K562 (cell line): ENCODE measurements at regions of chr12 and their contacts with region 1.

Region 1: GRCh38 chr12:47377414-47378221 is 297.9 kb upstream of the AMIGO2 start:
- DNase-seq: peak; percentile 16 to 79 (median 41)
- ATAC-seq: peak; percentile 98
- H3K4me3 ChIP-seq: no peak overlapping the region
- H3K27ac ChIP-seq: peak overlapping the region; percentile 50; the same call in 1 of the 3 replicates
- H3K4me1 ChIP-seq: peaks cover 3 to 31% of the 10 kb centered on the region in 2 experiments; a peak in 3 of 5 replicates
- H3K27me3 ChIP-seq: no peaks in the 10 kb centered on the region
- CTCF ChIP-seq: peak in 2 of 3 experiments; percentile 9 to 25; a peak in 2 of 6 replicates
- EP300 ChIP-seq: peak; percentile 92
- POLR2A ChIP-seq: no peak
- RAD21 ChIP-seq: peak in 1 of 2 experiments; percentile 33; a peak in 2 of 4 replicates

Region 2: DNA sequence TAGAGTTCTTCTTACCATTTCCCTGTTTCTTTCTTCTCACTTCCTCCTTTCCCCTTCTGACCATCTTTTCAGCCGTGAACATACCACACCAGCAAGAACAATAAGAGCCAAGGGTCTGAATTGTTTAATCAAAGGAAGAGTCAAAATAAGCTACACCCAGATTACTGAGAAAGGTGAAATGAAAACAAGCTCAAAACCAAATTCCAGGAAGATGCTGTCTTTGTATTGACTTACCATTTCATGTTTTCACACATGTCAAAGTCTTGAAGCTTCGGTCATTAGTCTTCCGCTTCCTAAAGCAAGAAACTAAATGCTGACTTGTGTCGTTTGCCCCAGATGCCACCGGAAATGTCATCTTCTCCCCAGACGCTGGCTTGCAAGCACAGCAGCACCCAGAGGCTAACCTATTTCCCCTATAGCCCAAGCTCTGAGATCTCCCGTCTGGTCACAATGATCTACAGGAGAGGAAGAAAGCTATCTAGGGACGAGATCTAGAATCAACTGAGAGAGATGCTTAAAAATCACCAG is 161.4 kb before region 1 on chr12:
- CTCF ChIA-PET with region 1: no interaction called
- POLR2A ChIA-PET with region 1: no interaction called
- in situ Hi-C with region 1: no loop called
- intact Hi-C with region 1: loop called (anchors 10 kb)
- DNase-seq: peak in 1 of 4 experiments; percentile 53
- ATAC-seq: peak; percentile 25
- H3K4me3 ChIP-seq: no peak overlapping the region
- H3K27ac ChIP-seq: peak overlapping the region; percentile 81
- H3K4me1 ChIP-seq: peaks cover 3 to 20% of the 10 kb centered on the region in 2 experiments; a peak in 4 of 5 replicates
- H3K27me3 ChIP-seq: no peaks in the 10 kb centered on the region
- CTCF ChIP-seq: no peak
- EP300 ChIP-seq: no peak
- POLR2A ChIP-seq: no peak
- RAD21 ChIP-seq: no peak

Region 3: DNA sequence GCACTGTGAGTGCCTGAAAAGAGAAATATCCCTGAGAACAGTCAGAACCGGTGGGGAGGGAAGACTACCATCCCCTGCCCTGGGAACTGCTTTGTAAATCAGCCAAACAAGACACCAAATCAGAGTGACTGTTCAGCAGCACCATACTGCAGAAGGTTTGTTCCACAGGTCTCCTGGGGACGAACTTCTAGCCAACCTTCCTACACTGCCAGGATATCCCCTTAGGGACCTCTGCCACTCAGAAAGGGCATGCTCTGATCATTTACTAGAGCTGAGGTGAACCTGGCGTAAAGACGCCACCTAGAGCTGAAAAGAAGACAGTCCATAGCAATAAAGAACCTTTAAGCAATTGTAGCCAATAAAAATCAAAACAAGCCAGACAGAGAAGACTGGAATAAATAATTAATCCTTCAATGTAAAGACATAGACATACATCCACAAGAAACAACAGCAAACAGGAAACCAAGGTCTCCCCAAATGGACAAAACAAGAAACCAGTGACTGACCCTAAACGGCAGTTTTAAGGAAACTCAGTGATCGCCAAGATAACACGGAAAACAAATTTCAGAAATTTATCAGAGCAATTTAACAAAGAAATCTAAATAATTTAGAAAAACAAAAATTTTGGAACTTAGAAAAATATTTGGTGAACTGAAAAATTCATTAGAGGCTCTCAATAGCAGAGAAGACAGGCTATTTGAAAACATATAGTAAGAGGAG is 69.8 kb before region 1 on chr12:
- CTCF ChIA-PET with region 1: no interaction called
- POLR2A ChIA-PET with region 1: no interaction called
- in situ Hi-C with region 1: no loop called
- intact Hi-C with region 1: no loop called
- DNase-seq: peak; percentile 13 to 70 (median 35)
- ATAC-seq: peak; percentile 95
- H3K4me3 ChIP-seq: no peak overlapping the region
- H3K27ac ChIP-seq: no peak overlapping the region
- H3K4me1 ChIP-seq: peaks cover 0 to 4% of the 10 kb centered on the region in 2 experiments; a peak in 2 of 5 replicates
- H3K27me3 ChIP-seq: no peaks in the 10 kb centered on the region
- CTCF ChIP-seq: peak; percentile 64 to 71 (median 70)
- EP300 ChIP-seq: no peak
- POLR2A ChIP-seq: no peak
- RAD21 ChIP-seq: peak; percentile 59 to 96

Region 4: GRCh38 chr12:47509398-47509851 is 131.8 kb after region 1 on chr12:
- CTCF ChIA-PET with region 1: no interaction called
- POLR2A ChIA-PET with region 1: no interaction called
- in situ Hi-C with region 1: no loop called
- intact Hi-C with region 1: no loop called
- DNase-seq: no peak
- ATAC-seq: no peak
- H3K4me3 ChIP-seq: no peak overlapping the region
- H3K27ac ChIP-seq: no peak overlapping the region
- H3K4me1 ChIP-seq: no peaks in the 10 kb centered on the region
- H3K27me3 ChIP-seq: no peaks in the 10 kb centered on the region
- CTCF ChIP-seq: no peak
- EP300 ChIP-seq: no peak
- POLR2A ChIP-seq: no peak
- RAD21 ChIP-seq: no peak